MCF 10A (cell line): ENCODE measurements at regions of chr11 and their contacts with region 1.

Region 1: GRCh38 chr11:36376888-36377758 is 81.0 kb downstream of the PRR5L start:
- DNase-seq: peak; percentile 31
- H3K4me3 Mint-ChIP-seq: peak overlapping the region; percentile 89
- H3K27ac Mint-ChIP-seq: peak overlapping the region; percentile 35
- H3K4me1 Mint-ChIP-seq: peaks cover 26% of the 10 kb centered on the region
- H3K27me3 Mint-ChIP-seq: no peaks in the 10 kb centered on the region
- CTCF ChIP-seq: peak; percentile 69

Region 2: GRCh38 chr11:36300651-36301050 is 76.5 kb before region 1 on chr11:
- CTCF ChIA-PET with region 1: interaction called, 3 read pairs
- POLR2A ChIA-PET with region 1: interaction called, 4 read pairs
- intact Hi-C with region 1: loop called (anchors 1 kb)
- DNase-seq: peak; percentile 86
- H3K4me3 Mint-ChIP-seq: peak overlapping the region; percentile 43
- H3K27ac Mint-ChIP-seq: peak overlapping the region; percentile 17
- H3K4me1 Mint-ChIP-seq: peaks cover 40% of the 10 kb centered on the region
- H3K27me3 Mint-ChIP-seq: no peaks in the 10 kb centered on the region
- CTCF ChIP-seq: no peak

Region 3: GRCh38 chr11:36311926-36312595 is 65.1 kb before region 1 on chr11:
- CTCF ChIA-PET with region 1: no interaction called
- POLR2A ChIA-PET with region 1: no interaction called
- intact Hi-C with region 1: loop called (anchors 2 kb)
- DNase-seq: peak; percentile 55
- H3K4me3 Mint-ChIP-seq: no peak overlapping the region
- H3K27ac Mint-ChIP-seq: peak overlapping the region; percentile 57
- H3K4me1 Mint-ChIP-seq: peaks cover 43% of the 10 kb centered on the region
- H3K27me3 Mint-ChIP-seq: no peaks in the 10 kb centered on the region
- CTCF ChIP-seq: no peak

Region 4: DNA sequence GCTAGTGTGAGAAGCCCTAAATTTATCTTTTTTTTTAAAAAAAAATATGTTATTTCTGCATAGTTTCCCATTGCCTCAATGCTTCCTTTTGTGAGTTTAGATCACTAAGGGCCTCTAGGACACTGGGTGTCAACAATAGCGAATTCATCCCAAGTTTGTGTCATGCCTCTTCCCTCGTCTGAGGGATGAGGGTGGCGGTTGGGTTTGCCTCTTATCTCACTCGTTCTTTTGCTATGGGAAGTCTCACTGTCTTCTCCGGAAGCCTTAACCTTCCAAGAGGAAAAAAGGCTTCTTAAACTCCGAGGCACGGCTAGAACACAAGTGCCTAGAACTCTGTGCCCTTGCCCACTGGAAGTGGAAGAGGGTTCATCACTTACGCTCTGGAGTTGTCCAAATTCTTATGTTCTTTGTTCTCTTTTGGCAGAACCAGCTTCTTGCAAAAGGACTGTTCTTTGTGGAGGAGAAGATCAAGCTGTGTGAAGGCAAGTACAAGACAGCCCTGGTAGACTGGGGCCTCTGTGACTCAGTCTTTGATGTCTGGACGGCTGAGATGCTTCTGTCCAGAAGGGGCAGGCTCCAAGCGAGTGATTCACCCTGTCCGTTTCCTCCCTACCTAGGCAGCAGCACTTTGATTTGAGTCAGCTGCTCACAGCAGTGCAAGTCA is 54.4 kb after region 1 on chr11:
- CTCF ChIA-PET with region 1: no interaction called
- POLR2A ChIA-PET with region 1: interaction called, 3 read pairs
- intact Hi-C with region 1: loop called (anchors 5 kb)
- DNase-seq: peak; percentile 90
- H3K4me3 Mint-ChIP-seq: no peak overlapping the region
- H3K27ac Mint-ChIP-seq: peak overlapping the region; percentile 50
- H3K4me1 Mint-ChIP-seq: peaks cover 27% of the 10 kb centered on the region
- H3K27me3 Mint-ChIP-seq: no peaks in the 10 kb centered on the region
- CTCF ChIP-seq: no peak